ENCODE measurements at regions of chr7 and their contacts with region 1.

Region 1: DNA sequence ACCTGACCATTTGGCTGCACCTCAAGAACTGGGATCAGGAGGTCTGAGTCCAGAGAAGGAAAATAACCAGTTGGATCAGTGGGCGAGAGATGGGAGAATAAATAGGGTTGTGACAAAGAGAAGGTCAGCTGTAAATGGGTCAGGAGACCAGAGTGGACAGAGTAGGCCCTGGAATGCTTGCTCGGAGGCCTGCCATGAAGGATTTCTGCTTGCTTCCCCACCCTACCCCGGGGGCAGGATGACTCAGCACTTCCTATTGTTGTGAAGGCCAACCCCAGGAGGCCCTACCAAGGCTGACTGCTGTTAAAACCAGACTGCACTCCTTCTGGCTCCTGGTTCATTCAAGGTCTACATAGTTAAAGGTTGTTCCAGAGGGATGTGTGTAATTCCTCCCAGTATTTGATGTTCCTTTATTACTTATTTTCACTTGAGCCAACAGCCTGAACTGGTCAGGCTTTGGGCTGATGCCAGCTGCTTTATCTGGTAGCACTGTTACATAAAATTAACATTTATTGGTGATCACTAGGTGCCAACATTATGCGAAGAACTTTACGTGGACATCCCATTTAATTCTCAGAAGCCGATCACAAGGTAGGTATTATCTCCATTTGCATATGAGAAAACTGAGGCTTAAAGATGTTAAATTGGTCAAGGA is 27.3 kb upstream of the IFRD1 start:
- DNase-seq: peak; percentile 93
- H3K4me3 ChIP-seq: no peak overlapping the region
- CTCF ChIP-seq: no peak

Region 2: GRCh38 chr7:111752022-111752582 is 670.9 kb before region 1 on chr7:
- in situ Hi-C with region 1: loop called (anchors 25 kb)
- DNase-seq: peak; percentile 52
- H3K4me3 ChIP-seq: no peak overlapping the region
- CTCF ChIP-seq: peak; percentile 94

Region 3: GRCh38 chr7:112743811-112744210 is 320.8 kb after region 1 on chr7:
- in situ Hi-C with region 1: no loop called
- DNase-seq: no peak
- H3K4me3 ChIP-seq: no peak overlapping the region
- CTCF ChIP-seq: no peak